Endothelial cell of umbilical vein (primary cell): ENCODE measurements at regions of chr17 and their contacts with region 1.

Region 1: GRCh38 chr17:59004338-59005111 is 102.2 kb downstream of the TRIM37 start:
- DNase-seq: peak; percentile 74
- H3K4me3 ChIP-seq: no peak overlapping the region
- H3K27ac ChIP-seq: no peak overlapping the region
- H3K4me1 ChIP-seq: peaks cover 30% of the 10 kb centered on the region
- H3K27me3 ChIP-seq: no peaks in the 10 kb centered on the region
- CTCF ChIP-seq: peak; percentile 69 to 79
- POLR2A ChIP-seq: no peak

Region 2: GRCh38 chr17:58577642-58578091 is 426.9 kb before region 1 on chr17:
- CTCF ChIA-PET with region 1: interaction called, 22 read pairs
- POLR2A ChIA-PET with region 1: no interaction called
- dilution Hi-C with region 1: no loop called
- intact Hi-C with region 1: loop called (anchors 2 kb)
- DNase-seq: peak; percentile 30
- H3K4me3 ChIP-seq: no peak overlapping the region
- H3K27ac ChIP-seq: no peak overlapping the region
- H3K4me1 ChIP-seq: no peaks in the 10 kb centered on the region
- H3K27me3 ChIP-seq: peaks cover 0 to 3% of the 10 kb centered on the region in 2 experiments
- CTCF ChIP-seq: peak; percentile 66 to 75
- POLR2A ChIP-seq: no peak

Region 3: GRCh38 chr17:58587702-58588254 is 416.7 kb before region 1 on chr17:
- CTCF ChIA-PET with region 1: interaction called, 100 read pairs
- POLR2A ChIA-PET with region 1: no interaction called
- dilution Hi-C with region 1: no loop called
- intact Hi-C with region 1: loop called (anchors 1 kb)
- DNase-seq: peak; percentile 68
- H3K4me3 ChIP-seq: no peak overlapping the region
- H3K27ac ChIP-seq: no peak overlapping the region
- H3K4me1 ChIP-seq: no peaks in the 10 kb centered on the region
- H3K27me3 ChIP-seq: peaks cover 3 to 7% of the 10 kb centered on the region in 2 experiments
- CTCF ChIP-seq: peak; percentile 92 to 95
- POLR2A ChIP-seq: no peak

Region 4: DNA sequence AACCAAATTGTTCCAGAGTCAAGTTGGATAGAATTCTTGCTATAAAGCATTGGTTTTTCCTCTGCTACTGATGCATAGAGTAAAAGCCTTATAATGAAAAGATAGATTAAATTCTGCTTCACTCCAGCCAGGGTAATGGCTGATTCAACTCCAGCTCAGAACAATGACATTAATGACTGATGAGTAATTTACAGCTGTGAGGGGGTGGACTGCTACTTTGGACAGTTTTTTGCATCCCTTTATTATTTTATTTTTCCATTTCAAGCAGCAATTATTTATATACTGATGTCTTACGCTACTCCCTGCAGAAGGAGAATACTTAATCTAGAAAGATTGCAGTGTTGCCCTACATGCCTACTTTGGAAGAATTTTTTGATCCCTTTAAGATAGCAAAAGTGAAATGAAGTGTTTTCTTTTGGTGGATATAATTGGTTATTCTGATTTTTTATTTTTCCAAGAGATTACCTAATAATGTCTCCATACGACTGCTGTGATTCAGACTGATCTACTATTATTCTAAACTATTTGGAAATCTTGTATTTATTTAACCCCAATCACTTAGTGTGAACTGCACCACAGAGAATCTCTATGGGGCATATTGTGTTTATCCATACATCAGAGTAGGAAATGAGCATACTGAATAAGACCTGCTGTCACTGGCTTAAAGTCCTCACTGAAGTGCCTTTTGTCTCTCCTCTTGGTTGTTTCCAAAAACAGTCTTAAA is 47.4 kb before region 1 on chr17:
- CTCF ChIA-PET with region 1: interaction called, 5 read pairs
- POLR2A ChIA-PET with region 1: no interaction called
- dilution Hi-C with region 1: no loop called
- intact Hi-C with region 1: loop called (anchors 2 kb)
- DNase-seq: peak; percentile 61
- H3K4me3 ChIP-seq: no peak overlapping the region
- H3K27ac ChIP-seq: peak overlapping the region; percentile 64
- H3K4me1 ChIP-seq: peaks cover 13% of the 10 kb centered on the region
- H3K27me3 ChIP-seq: no peaks in the 10 kb centered on the region
- CTCF ChIP-seq: no peak
- POLR2A ChIP-seq: no peak